GM10248 (cell line): ENCODE measurements at regions of chr22 and their contacts with region 1.

Region 1: DNA sequence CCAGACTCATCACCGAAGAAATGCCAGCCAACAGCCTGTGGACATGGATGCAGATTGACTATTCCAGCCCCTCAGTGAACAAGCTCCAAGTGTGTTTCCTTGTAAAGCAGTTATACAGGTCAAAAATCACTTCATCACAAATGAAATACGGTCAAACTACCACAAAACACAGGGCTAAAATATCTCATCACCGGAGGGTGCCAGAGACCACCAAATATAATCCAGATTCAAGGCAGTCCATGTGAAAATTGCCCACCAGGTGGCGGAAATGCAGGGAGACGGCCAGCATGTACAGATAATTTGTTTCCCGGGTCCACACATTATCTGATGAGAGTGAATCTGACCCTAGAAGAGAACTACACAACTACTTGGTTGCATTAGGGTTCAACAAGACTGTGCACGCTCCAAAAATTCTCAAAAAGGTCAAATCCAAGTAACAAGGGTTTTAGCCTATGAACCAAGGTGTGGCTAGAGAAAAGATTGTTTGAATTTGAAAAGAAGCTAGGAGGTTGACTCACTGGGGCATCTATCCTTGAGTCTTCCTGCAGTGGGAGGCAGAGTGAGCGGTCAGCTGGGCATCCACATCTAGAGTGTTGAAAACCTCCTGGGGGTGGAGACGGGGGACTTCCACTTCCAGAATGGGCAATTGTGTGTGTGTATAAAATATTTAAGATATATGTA is 71.7 kb downstream of the IGLL5 start:
- DNase-seq: peak; percentile 63
- CTCF ChIP-seq: peak; percentile 88

Region 2: DNA sequence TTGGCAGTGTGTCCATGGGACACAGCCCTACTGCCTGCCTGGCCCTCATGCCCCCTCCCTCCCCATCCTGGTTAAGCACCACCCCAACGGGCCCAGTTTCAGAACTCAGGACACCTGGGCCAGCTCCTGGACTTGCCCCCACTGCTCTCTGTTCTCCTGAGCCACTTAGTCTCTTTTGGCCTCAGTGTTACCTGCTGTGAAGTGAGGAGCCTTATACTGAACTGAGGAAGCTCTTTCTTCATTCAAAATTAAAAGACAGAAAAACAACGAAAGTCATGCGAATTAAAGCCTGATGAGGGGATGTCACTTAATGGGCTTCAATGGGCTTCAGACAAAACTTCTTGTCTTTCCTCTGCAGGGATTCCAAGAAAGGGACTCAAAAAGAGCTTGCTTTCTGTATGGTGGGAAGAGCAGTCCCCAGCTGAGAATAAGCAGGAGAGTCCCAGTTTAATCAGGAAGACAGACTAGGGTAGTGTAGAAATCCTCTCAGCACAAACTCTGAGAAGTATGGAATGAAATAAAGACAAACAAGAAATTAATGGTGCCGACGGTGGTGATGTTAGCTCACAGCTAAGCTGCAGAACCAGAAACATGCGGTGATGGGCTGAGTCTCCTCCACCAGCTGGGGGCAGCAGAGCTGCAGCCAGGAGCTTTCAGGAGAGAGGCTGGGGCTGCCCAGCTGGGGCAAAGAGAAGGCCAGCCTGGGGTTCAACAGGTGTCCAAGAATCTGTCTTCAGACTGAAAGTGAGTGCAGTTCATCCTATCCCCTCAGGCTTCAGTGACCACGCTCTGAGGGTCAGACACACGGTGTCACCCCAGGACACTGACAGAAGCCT is 213.8 kb before region 1 on chr22:
- CTCF ChIA-PET with region 1: interaction called, 106 read pairs
- POLR2A ChIA-PET with region 1: no interaction called
- DNase-seq: peak; percentile 54
- CTCF ChIP-seq: peak; percentile 83

Region 3: DNA sequence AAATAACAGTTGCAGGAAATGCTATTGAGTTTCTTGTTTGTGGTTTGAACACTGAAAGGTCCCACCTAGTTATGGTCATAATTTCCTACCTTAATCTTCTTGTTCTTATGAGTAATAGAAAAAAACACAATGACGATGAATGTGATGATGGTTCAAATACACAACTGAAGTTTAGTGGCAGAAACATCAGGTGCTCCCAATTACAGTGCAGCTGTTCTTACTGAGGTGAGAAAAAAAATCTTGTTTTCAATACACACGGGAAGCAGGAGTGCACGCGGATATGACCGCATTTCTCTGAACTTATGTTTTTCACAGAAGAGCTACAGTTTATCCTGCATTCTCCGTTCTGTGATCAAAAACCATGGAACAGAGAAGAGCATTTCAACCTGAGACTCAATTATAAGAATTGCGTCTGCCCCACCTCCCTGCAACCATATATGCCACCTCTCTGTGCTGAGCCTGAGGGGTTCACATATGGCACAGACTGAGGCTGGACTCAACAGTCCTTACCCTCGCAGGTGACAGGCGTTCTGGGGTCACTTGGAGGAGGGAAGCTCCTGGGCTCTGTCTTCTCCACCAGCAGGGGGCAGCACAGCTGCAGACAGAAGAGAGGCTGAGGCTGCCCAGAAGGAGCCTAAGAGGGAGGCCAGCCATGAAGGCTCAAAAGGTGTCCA is 171.4 kb before region 1 on chr22:
- CTCF ChIA-PET with region 1: interaction called, 107 read pairs
- POLR2A ChIA-PET with region 1: no interaction called
- DNase-seq: peak; percentile 79
- CTCF ChIP-seq: peak; percentile 85

Region 4: DNA sequence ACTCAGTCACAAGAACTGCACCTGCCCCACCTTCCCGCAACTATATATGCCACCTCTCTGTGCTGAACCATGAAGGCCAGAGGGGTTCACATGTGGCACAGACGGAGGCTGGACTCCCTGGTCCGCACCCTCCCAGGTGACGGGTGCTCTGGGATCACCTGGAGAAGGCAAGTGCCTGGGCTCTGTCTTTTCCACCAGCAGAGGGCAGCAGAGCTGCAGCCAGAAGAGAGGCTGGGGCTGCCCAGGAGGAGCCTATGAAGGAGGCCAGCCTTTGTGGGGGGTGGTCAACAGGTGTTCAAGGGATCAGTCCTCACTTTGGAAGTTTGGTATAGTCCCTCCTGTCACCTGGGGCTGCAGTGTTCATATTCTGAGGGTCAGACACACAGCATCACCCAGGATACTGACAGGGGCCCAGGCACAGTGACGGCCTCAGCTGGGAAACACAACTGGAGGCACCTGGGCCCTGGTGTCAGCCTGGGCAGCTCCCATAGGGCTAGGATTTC is 110.9 kb before region 1 on chr22:
- CTCF ChIA-PET with region 1: interaction called, 390 read pairs
- POLR2A ChIA-PET with region 1: no interaction called
- DNase-seq: peak; percentile 59
- CTCF ChIP-seq: peak; percentile 88

Region 5: GRCh38 chr22:22893077-22893805 is 66.0 kb before region 1 on chr22:
- CTCF ChIA-PET with region 1: interaction called, 13 read pairs
- POLR2A ChIA-PET with region 1: no interaction called
- DNase-seq: no peak
- CTCF ChIP-seq: no peak

Region 6: GRCh38 chr22:22976033-22976922 is 17.0 kb after region 1 on chr22:
- CTCF ChIA-PET with region 1: interaction called, 12 read pairs
- POLR2A ChIA-PET with region 1: no interaction called
- DNase-seq: no peak
- CTCF ChIP-seq: no peak

Region 7: GRCh38 chr22:23137905-23138561 is 178.7 kb after region 1 on chr22:
- CTCF ChIA-PET with region 1: interaction called, 135 read pairs
- POLR2A ChIA-PET with region 1: no interaction called
- DNase-seq: peak; percentile 67
- CTCF ChIP-seq: no peak

Region 8: GRCh38 chr22:23213581-23214334 is 254.5 kb after region 1 on chr22:
- CTCF ChIA-PET with region 1: no interaction called
- POLR2A ChIA-PET with region 1: no interaction called
- DNase-seq: no peak
- CTCF ChIP-seq: no peak